Calu3 (cell line): ENCODE measurements at regions of chr2 and their contacts with region 1.

Region 1: GRCh38 chr2:177397481-177398289 is 5.1 kb downstream of the AGPS start:
- DNase-seq: peak; percentile 54
- H3K4me3 Mint-ChIP-seq: peak overlapping the region; percentile 7
- H3K27ac Mint-ChIP-seq: peak overlapping the region; percentile 70
- H3K4me1 Mint-ChIP-seq: peaks cover 68% of the 10 kb centered on the region
- H3K27me3 Mint-ChIP-seq: no peaks in the 10 kb centered on the region
- CTCF ChIP-seq: no peak

Region 2: DNA sequence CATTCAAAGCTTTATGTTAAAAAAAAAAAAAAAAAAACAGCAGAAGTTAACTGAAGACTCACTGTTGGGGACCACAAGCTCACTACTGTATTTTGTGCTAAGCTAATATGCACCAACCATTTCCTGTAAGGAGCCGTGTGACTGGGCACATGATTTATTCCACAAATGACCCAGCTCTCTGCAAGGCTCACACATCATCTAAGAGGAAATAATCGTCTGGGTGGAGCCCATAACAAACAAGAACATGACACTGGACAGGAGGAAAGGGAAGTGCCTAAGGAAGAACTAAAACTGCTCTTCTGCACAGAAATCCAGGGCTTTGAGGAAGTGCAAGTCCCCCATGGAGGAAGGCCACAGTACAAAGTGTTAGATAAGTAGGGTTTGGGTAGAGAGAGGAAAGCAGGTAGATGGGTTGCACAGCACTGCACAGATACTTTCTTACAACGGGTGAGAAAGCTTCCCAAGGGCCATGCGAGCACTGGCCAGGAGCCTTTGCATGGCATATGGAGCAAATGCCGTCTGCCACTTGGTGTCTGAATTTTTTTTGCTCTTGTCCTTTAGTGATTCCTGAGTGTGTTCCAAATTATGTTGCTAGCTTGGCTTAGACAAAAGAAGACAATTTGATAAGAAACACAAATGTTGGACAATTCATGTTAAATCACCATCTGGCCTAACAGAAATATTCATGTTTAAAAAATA is 157.6 kb before region 1 on chr2:
- CTCF ChIA-PET with region 1: no interaction called
- intact Hi-C with region 1: loop called (anchors 5 kb)
- DNase-seq: peak; percentile 53
- H3K4me3 Mint-ChIP-seq: peak overlapping the region; percentile 70
- H3K27ac Mint-ChIP-seq: peak overlapping the region; percentile 99
- H3K4me1 Mint-ChIP-seq: peaks cover 63% of the 10 kb centered on the region
- H3K27me3 Mint-ChIP-seq: no peaks in the 10 kb centered on the region
- CTCF ChIP-seq: no peak

Region 3: GRCh38 chr2:177254433-177255226 is 143.1 kb before region 1 on chr2:
- CTCF ChIA-PET with region 1: no interaction called
- intact Hi-C with region 1: loop called (anchors 5 kb)
- DNase-seq: peak; percentile 81
- H3K4me3 Mint-ChIP-seq: peak overlapping the region; percentile 17
- H3K27ac Mint-ChIP-seq: peak overlapping the region; percentile 74
- H3K4me1 Mint-ChIP-seq: peaks cover 77% of the 10 kb centered on the region
- H3K27me3 Mint-ChIP-seq: no peaks in the 10 kb centered on the region
- CTCF ChIP-seq: peak; percentile 82

Region 4: DNA sequence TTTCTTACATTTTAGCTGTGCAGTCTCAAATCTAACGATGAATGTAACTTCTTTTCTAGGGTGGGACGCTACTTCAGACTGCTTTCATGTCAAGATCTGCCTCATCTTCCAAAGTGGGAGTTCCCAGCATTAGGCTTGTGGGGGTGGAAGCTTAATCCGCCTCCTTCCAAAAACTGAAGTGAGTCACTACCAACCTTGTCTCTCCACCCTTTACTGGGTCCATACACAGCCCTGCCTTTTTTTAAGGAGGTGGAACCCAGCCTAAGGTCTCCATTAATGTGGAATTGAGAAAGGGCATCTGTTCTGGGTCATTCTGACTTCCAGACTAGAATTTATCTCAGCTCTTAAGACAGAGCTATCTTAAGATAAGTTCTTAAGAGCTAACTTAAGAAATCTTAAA is 91.1 kb before region 1 on chr2:
- CTCF ChIA-PET with region 1: no interaction called
- intact Hi-C with region 1: no loop called
- DNase-seq: no peak
- H3K4me3 Mint-ChIP-seq: no peak overlapping the region
- H3K27ac Mint-ChIP-seq: no peak overlapping the region
- H3K4me1 Mint-ChIP-seq: no peaks in the 10 kb centered on the region
- H3K27me3 Mint-ChIP-seq: no peaks in the 10 kb centered on the region
- CTCF ChIP-seq: no peak

Region 5: GRCh38 chr2:177419274-177419673 is 21.6 kb after region 1 on chr2:
- CTCF ChIA-PET with region 1: no interaction called
- intact Hi-C with region 1: loop called (anchors 2 kb)
- DNase-seq: no peak
- H3K4me3 Mint-ChIP-seq: no peak overlapping the region
- H3K27ac Mint-ChIP-seq: peak overlapping the region; percentile 55
- H3K4me1 Mint-ChIP-seq: peaks cover 40% of the 10 kb centered on the region
- H3K27me3 Mint-ChIP-seq: no peaks in the 10 kb centered on the region
- CTCF ChIP-seq: no peak